Activated B cell treated with CpG ODN at 0.5 μM for 24 hours (primary cell): ENCODE measurements at regions of chr11 and their contacts with region 1.

Region 1: DNA sequence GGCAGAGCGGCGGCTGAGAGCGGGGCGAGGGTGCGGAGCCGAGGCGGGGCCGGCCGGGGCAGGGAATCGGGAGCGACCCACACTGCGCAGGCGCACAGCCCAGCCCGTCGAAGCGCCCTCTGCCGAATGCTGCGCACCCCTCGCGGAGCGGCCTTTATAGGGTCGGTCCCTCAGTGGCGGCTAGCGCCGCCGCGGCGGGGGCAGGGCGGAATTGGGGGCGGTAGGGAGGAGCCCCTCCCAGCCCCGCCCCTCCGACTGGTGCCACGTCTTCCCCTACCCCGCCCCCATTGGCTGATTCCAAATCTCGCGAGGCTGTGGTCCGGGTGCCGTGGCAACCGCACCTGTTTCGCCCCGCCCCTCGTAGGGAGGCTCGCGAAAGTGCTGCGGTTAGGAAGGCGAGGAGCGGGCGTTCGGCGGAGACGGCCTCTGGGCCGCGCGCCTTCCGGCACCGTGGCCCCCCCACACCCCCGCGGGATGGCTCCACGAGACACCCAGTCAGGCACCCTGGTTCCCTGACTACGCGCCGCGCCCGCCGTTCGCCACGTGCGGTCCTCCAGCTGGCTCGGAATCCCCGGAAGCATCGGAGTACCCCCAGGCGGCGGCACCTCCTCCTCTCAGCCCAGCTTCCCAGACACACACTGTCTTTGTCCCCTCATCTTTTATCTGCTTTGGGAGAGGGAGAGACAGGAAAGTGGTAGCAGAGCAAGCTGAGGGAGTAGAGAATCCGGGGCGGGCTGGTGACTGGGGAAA is at the start of gene EHD1:
- DNase-seq: peak; percentile 98
- ATAC-seq: peak; percentile 81
- H3K4me3 Mint-ChIP-seq: peak within 1 kb of the TSS; percentile 97
- H3K27ac Mint-ChIP-seq: peak within 1 kb of the TSS; percentile 95
- H3K4me1 Mint-ChIP-seq: peaks cover 57% of the 10 kb centered on the region
- H3K27me3 Mint-ChIP-seq: no peaks in the 10 kb centered on the region
- CTCF ChIP-seq: no peak
- total RNA-seq, gene EHD1: 357 and 360 TPM in 2 replicates

Region 2: DNA sequence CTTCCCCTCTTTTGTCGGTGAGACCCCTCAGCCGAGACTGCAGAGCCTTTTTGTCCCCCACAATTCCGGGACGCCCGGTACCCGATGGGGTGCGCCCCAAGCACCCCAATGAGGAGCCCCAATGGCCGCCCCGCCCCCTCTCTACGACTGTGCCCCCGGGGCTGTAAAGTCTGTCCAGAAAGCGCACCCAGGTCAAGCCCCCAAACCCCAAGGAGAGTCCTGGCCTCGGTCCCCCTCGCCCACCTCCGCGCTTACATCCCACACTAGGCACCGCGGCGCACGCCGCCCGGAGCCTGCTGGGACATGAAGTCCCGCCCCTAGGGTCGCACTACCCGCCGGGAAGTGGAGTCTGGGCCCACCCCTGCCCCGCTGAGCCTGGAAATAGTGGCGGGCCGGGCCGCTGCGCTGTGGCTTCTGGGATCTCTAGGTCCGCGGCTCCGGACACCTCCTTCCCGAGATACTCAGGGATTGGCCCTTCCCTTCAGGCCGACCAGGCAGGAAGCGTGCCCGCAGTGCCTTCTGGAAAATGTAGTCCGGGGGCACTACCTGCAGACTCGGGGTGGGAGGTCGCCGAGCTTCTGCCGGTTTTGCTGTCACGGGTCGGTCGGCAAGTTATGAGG is 68.3 kb before region 1 on chr11 and contains the start of gene MEN1:
- CTCF ChIA-PET with region 1: no interaction called
- POLR2A ChIA-PET with region 1: no interaction called
- intact Hi-C with region 1: loop called (anchors 1 kb)
- DNase-seq: peak; percentile 78
- ATAC-seq: peak; percentile 87
- H3K4me3 Mint-ChIP-seq: peak within 1 kb of the TSS; percentile 96
- H3K27ac Mint-ChIP-seq: peak within 1 kb of the TSS; percentile 85
- H3K4me1 Mint-ChIP-seq: peaks cover 36% of the 10 kb centered on the region
- H3K27me3 Mint-ChIP-seq: no peaks in the 10 kb centered on the region
- CTCF ChIP-seq: no peak
- total RNA-seq, gene MEN1: 35.1 and 44.6 TPM in 2 replicates

Region 3: GRCh38 chr11:64864473-64865285 is 14.0 kb before region 1 on chr11:
- CTCF ChIA-PET with region 1: interaction called, 10 read pairs
- POLR2A ChIA-PET with region 1: interaction called, 1,194 read pairs
- intact Hi-C with region 1: loop called (anchors 1 kb)
- DNase-seq: no peak
- ATAC-seq: no peak
- H3K4me3 Mint-ChIP-seq: peak overlapping the region; percentile 73
- H3K27ac Mint-ChIP-seq: peak overlapping the region; percentile 92
- H3K4me1 Mint-ChIP-seq: peaks cover 96% of the 10 kb centered on the region
- H3K27me3 Mint-ChIP-seq: no peaks in the 10 kb centered on the region
- CTCF ChIP-seq: no peak

Region 4: GRCh38 chr11:64894070-64894796 is 15.6 kb after region 1 on chr11:
- CTCF ChIA-PET with region 1: interaction called, 5 read pairs
- POLR2A ChIA-PET with region 1: interaction called, 11 read pairs
- intact Hi-C with region 1: no loop called
- DNase-seq: peak; percentile 93
- ATAC-seq: peak; percentile 99
- H3K4me3 Mint-ChIP-seq: no peak overlapping the region
- H3K27ac Mint-ChIP-seq: no peak overlapping the region
- H3K4me1 Mint-ChIP-seq: peaks cover 26% of the 10 kb centered on the region
- H3K27me3 Mint-ChIP-seq: no peaks in the 10 kb centered on the region
- CTCF ChIP-seq: peak; percentile 67

Region 5: GRCh38 chr11:64916775-64917662 is 38.4 kb after region 1 on chr11 and contains the start of gene ATG2A:
- CTCF ChIA-PET with region 1: no interaction called
- POLR2A ChIA-PET with region 1: no interaction called
- intact Hi-C with region 1: loop called (anchors 1 kb)
- DNase-seq: peak; percentile 97
- ATAC-seq: peak; percentile 98
- H3K4me3 Mint-ChIP-seq: peak within 1 kb of the TSS; percentile 88
- H3K27ac Mint-ChIP-seq: peak within 1 kb of the TSS; percentile 85
- H3K4me1 Mint-ChIP-seq: peaks cover 38% of the 10 kb centered on the region
- H3K27me3 Mint-ChIP-seq: no peaks in the 10 kb centered on the region
- CTCF ChIP-seq: no peak
- total RNA-seq, gene ATG2A: 31.2 and 35.0 TPM in 2 replicates

Region 6: DNA sequence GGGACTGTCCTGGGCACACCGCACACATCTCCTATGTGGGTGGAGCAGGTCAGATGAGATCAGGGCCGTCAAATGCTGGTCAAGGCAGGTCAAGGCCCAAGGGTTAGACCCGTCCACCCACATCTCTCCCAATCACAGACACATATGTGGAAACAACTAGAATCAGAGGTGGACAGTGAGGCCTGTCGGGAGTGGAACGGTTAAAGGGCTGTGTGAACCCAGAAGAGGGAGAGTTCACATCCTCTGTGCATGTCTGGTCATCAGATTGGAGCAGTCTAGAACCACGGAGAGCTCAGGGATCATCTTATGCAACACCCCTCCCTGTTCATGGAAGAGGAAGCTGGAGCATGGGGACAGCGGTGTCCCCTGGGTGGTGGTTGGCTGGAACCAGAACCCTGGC is 141.2 kb after region 1 on chr11:
- CTCF ChIA-PET with region 1: no interaction called
- POLR2A ChIA-PET with region 1: no interaction called
- intact Hi-C with region 1: no loop called
- DNase-seq: no peak
- ATAC-seq: no peak
- H3K4me3 Mint-ChIP-seq: no peak overlapping the region
- H3K27ac Mint-ChIP-seq: no peak overlapping the region
- H3K4me1 Mint-ChIP-seq: peaks cover 14% of the 10 kb centered on the region
- H3K27me3 Mint-ChIP-seq: no peaks in the 10 kb centered on the region
- CTCF ChIP-seq: no peak